GM12878 (cell line): ENCODE measurements at regions of chr6 and their contacts with region 1.

Region 1: DNA sequence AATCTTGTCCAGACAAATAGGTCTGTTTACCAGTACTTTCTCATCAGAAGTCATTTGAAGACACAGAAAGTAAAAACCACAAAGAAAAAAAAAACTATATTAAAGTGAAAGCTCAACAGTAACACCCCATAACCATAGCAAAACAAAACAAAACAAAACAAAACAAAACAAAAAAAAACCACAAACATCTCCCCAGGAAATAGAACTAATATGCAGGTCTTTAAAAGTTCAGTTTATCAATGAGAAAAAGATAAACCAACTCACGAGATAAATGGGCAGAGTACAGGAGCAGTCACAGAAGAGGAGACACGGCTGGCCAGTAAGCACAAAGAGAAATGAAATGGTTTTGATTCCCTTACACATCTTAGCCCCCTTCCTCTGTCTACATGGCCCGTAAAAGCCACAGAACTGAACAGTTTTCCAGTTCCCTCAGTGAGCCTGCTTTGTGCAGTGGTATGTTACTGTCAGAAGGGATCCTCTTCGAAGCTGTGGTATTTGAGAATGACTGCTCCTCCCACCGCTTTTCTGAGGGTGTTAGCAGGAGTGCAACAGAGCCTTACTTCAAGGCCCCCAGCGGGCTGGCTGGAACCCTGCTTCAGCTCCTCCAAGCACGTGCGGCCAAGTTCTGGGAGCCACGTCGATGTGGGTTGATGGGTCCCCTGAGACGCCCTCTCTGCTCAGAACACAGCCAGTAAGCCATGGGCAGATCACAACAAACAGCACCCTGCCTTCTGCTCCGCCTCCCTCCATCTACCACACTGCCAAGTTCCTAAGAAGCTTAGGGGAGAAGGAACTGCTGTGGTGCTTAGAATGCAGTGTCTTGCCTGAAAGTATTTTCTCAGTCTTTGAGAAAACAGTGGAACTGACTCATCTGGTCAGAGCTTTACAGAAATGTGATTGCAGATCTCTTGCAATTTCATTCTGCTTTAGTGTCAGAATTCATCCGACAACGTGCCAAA is 14.0 kb downstream of the UST start:
- DNase-seq: peak; percentile 64
- ATAC-seq: peak; percentile 63
- H3K4me3 ChIP-seq: peak overlapping the region; percentile 39; the same call in 1 of the 2 replicates
- H3K27ac ChIP-seq: peak overlapping the region; percentile 85
- H3K4me1 ChIP-seq: peaks cover 43% of the 10 kb centered on the region
- H3K27me3 ChIP-seq: no peaks in the 10 kb centered on the region
- CTCF ChIP-seq: no peak
- EP300 ChIP-seq: peak; percentile 40 to 75; a peak in 3 of 4 replicates
- POLR2A ChIP-seq: peak; percentile 73
- RAD21 ChIP-seq: no peak

Region 2: DNA sequence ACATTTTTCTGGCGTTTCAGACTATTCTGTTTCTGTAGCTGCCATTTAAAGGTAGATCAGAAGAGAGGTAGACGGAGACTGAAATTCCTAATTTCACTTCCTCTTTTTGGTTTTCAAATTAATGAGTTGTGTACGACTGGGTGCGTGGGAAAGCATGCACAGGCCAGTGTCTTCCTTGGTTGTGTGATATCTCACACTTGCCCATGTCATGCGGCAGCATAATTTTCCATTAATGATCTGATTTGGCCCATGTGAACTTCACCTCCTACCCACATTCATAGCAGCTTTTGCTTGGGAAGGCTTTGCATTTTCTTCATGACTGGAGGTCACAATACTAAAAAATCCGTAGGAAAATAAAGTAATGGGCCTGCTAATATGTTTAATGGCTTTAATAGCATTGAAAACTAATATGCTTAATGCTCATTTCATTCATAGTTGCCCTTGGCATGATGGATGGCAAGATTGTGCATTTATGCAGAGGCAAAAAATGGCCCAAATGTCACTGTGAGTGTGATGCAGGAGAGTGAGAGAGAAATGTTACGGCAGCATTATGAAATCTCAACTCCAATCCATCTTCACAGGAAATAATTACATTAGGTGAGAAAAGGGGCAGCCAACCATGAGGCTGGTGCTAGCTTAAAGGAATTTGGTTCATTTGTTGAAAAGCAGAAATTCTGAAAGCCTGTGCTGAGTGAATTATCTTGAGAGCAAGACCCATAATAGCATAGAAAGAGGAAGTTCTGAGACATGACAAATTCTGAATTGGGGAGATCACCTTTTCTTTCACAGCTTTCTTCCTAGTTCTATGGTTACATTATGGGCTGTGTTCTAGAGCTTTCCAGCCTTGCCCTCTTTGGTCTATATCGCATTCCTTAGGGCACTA is 83.0 kb before region 1 on chr6:
- CTCF ChIA-PET with region 1: interaction called, 3 read pairs
- POLR2A ChIA-PET with region 1: interaction called, 7 read pairs
- RAD21 ChIA-PET with region 1: interaction called, 14 read pairs
- SMC1A ChIA-PET with region 1: interaction called, 16 read pairs
- in situ Hi-C with region 1: loop called (anchors 5 kb)
- intact Hi-C with region 1: loop called (anchors 1 kb)
- DNase-seq: peak; percentile 82
- ATAC-seq: peak; percentile 90
- H3K4me3 ChIP-seq: no peak overlapping the region
- H3K27ac ChIP-seq: peak overlapping the region; percentile 75
- H3K4me1 ChIP-seq: peaks cover 20% of the 10 kb centered on the region
- H3K27me3 ChIP-seq: no peaks in the 10 kb centered on the region
- CTCF ChIP-seq: no peak
- EP300 ChIP-seq: peak; percentile 74 to 90; a peak in 3 of 4 replicates
- POLR2A ChIP-seq: no peak
- RAD21 ChIP-seq: no peak

Region 3: DNA sequence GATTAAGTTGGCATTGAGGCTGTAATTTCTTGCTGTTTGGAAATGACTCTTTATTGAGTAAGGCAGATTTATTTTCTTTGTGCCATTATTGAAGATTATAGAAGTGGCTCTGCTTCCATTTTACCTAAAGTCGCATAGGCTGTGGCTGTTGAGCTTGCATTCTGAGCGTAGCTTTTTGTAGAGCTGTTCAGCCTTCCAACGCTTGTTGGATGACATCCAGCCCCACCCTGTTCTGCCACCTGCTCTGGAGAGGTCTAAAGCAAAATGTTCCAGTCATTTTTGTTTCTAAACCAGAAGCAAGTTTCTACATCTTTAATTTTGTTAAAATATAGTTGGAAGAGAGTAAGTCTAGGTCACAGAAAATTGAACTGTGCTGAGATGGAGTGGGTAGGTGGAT is 10.4 kb after region 1 on chr6:
- CTCF ChIA-PET with region 1: interaction called, 4 read pairs
- POLR2A ChIA-PET with region 1: no interaction called
- RAD21 ChIA-PET with region 1: interaction called, 17 read pairs
- SMC1A ChIA-PET with region 1: interaction called, 9 read pairs
- in situ Hi-C with region 1: no loop called
- intact Hi-C with region 1: no loop called
- DNase-seq: no peak
- ATAC-seq: no peak
- H3K4me3 ChIP-seq: no peak overlapping the region
- H3K27ac ChIP-seq: no peak overlapping the region
- H3K4me1 ChIP-seq: no peaks in the 10 kb centered on the region; the same call in 1 of the 2 replicates
- H3K27me3 ChIP-seq: no peaks in the 10 kb centered on the region; a peak in 2 of 4 replicates
- CTCF ChIP-seq: no peak
- EP300 ChIP-seq: no peak
- POLR2A ChIP-seq: no peak
- RAD21 ChIP-seq: no peak

Region 4: GRCh38 chr6:148831064-148831463 is 70.2 kb after region 1 on chr6:
- CTCF ChIA-PET with region 1: interaction called, 4 read pairs
- POLR2A ChIA-PET with region 1: no interaction called
- RAD21 ChIA-PET with region 1: interaction called, 5 read pairs
- SMC1A ChIA-PET with region 1: interaction called, 3 read pairs
- in situ Hi-C with region 1: no loop called
- intact Hi-C with region 1: loop called (anchors 2 kb)
- DNase-seq: no peak
- ATAC-seq: peak; percentile 73
- H3K4me3 ChIP-seq: no peak overlapping the region
- H3K27ac ChIP-seq: no peak overlapping the region
- H3K4me1 ChIP-seq: no peaks in the 10 kb centered on the region
- H3K27me3 ChIP-seq: no peaks in the 10 kb centered on the region
- CTCF ChIP-seq: no peak
- EP300 ChIP-seq: no peak
- POLR2A ChIP-seq: no peak
- RAD21 ChIP-seq: no peak

Region 5: GRCh38 chr6:148947621-148948444 is 187.0 kb after region 1 on chr6:
- CTCF ChIA-PET with region 1: interaction called, 6 read pairs
- POLR2A ChIA-PET with region 1: no interaction called
- RAD21 ChIA-PET with region 1: no interaction called
- SMC1A ChIA-PET with region 1: interaction called, 5 read pairs
- in situ Hi-C with region 1: no loop called
- intact Hi-C with region 1: loop called (anchors 5 kb)
- DNase-seq: peak; percentile 27
- ATAC-seq: peak; percentile 94
- H3K4me3 ChIP-seq: no peak overlapping the region
- H3K27ac ChIP-seq: no peak overlapping the region
- H3K4me1 ChIP-seq: no peaks in the 10 kb centered on the region
- H3K27me3 ChIP-seq: no peaks in the 10 kb centered on the region; a peak in 1 of 4 replicates
- CTCF ChIP-seq: peak; percentile 82 to 84 (median 83)
- EP300 ChIP-seq: no peak
- POLR2A ChIP-seq: no peak
- RAD21 ChIP-seq: peak; percentile 87